ENCODE measurements at regions of chr7 and their contacts with region 1.

Region 1: GRCh38 chr7:30322271-30323005 is 38.0 kb downstream of the ZNRF2 start:
- DNase-seq: peak; percentile 34
- CTCF ChIP-seq: no peak

Region 2: GRCh38 chr7:30159698-30160143 is 162.7 kb before region 1 on chr7:
- CTCF ChIA-PET with region 1: no interaction called
- POLR2A ChIA-PET with region 1: no interaction called
- DNase-seq: no peak
- CTCF ChIP-seq: no peak

Region 3: GRCh38 chr7:30225863-30226613 is 96.4 kb before region 1 on chr7:
- CTCF ChIA-PET with region 1: no interaction called
- POLR2A ChIA-PET with region 1: no interaction called
- DNase-seq: peak; percentile 65
- CTCF ChIP-seq: no peak

Region 4: GRCh38 chr7:30303312-30304039 is 19.0 kb before region 1 on chr7:
- CTCF ChIA-PET with region 1: interaction called, 15 read pairs
- POLR2A ChIA-PET with region 1: interaction called, 6 read pairs
- DNase-seq: no peak
- CTCF ChIP-seq: no peak

Region 5: GRCh38 chr7:30312178-30312577 is 10.3 kb before region 1 on chr7:
- CTCF ChIA-PET with region 1: interaction called, 14 read pairs
- POLR2A ChIA-PET with region 1: interaction called, 6 read pairs
- DNase-seq: no peak
- CTCF ChIP-seq: no peak

Measured in GM10248 (cell line).